ENCODE measurements at regions of chr5 and their contacts with region 1.

Region 1: GRCh38 chr5:181243512-181244343 is at the start of gene RACK1:
- DNase-seq: peak; percentile 95
- H3K4me3 ChIP-seq: peak within 1 kb of the TSS; percentile 61 to 96 (median 82)
- H3K27ac ChIP-seq: peak within 1 kb of the TSS; percentile 87 to 98 (median 94)
- H3K4me1 ChIP-seq: peaks cover 43 to 90% (median 75%) of the 10 kb centered on the region in 6 donors
- H3K27me3 ChIP-seq: no peaks in the 10 kb centered on the region
- CTCF ChIP-seq: peak in 1 of 11 experiments; percentile 16
- POLR2A ChIP-seq: peak in 2 of 3 donors; percentile 20 to 24
- total RNA-seq, gene RACK1: 1,202 to 2,949 (median 1,651) TPM

Region 2: DNA sequence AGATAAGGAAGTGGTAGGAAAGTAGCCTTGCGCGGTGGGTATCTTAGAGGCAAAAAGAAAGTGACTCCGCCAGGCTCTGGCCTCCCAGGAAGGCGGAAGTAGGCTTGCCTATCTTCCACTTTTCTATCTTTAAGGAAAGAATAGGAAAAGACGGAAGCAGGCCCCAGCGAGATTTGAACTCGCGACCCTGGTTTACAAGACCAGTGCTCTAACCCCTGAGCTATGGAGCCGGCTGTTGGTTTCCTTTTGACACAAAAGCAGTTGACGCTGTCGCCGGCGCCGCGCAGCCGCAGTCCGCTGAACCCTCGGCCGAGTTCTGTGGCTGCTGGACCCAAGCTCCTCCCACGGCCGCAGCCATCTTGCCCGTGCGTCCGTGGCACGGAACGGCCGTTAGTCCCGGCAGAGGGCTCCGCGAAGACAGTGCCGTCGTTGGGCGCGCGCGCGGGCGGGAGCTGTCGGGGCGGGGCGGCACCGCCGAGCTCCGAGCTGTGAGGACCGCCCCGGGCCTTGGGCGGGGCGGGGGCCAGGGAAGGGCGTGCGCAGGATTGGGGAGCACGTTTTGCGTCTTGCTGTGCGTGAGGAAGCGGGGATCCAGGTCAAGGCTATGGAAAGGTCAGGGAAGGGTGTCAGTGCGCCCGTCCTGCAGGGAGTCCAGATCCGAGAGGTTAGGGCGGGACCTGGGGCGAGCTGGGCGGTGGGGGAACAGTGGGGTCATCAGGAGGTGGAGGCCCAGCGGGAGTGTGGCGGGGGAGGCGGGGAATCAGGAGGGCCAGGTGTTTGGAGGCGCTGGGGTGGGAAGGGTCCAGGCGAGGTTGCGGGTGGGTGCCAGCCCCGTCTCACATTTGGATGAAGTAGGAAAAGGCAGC is 52.0 kb before region 1 on chr5:
- intact Hi-C with region 1: loop called (anchors 5 kb)
- DNase-seq: peak; percentile 98
- H3K4me3 ChIP-seq: peak overlapping the region; percentile 66 to 95 (median 88)
- H3K27ac ChIP-seq: peak overlapping the region; percentile 74 to 96 (median 94)
- H3K4me1 ChIP-seq: peaks cover 3 to 60% (median 34%) of the 10 kb centered on the region in 6 donors
- H3K27me3 ChIP-seq: no peaks in the 10 kb centered on the region
- CTCF ChIP-seq: peak in 2 of 11 experiments; percentile 11 to 35
- POLR2A ChIP-seq: peak in 2 of 3 donors; percentile 42 to 64

Measured in spleen (tissue), 13 donors.